AG04450 (cell line): ENCODE measurements at regions of chr11 and their contacts with region 1.

Region 1: GRCh38 chr11:124673333-124674167 is at the starts of genes SIAE and SPA17:
- DNase-seq: peak; percentile 92
- H3K4me3 ChIP-seq: peak within 1 kb of the TSS; percentile 74
- H3K27ac ChIP-seq: peak within 1 kb of the TSS; percentile 69
- H3K27me3 ChIP-seq: no peaks in the 10 kb centered on the region
- CTCF ChIP-seq: no peak
- polyA plus RNA-seq, gene SIAE: 33.5 and 37.9 TPM in 2 replicates
- polyA plus RNA-seq, gene SPA17: 6.5 and 8.4 TPM in 2 replicates

Region 2: GRCh38 chr11:124551189-124551588 is 122.4 kb before region 1 on chr11:
- CTCF ChIA-PET with region 1: no interaction called
- POLR2A ChIA-PET with region 1: no interaction called
- DNase-seq: no peak
- H3K4me3 ChIP-seq: no peak overlapping the region
- H3K27ac ChIP-seq: no peak overlapping the region
- H3K27me3 ChIP-seq: no peaks in the 10 kb centered on the region
- CTCF ChIP-seq: no peak

Region 3: GRCh38 chr11:124622531-124623451 is 50.8 kb before region 1 on chr11 and contains the start of gene TBRG1:
- CTCF ChIA-PET with region 1: no interaction called
- POLR2A ChIA-PET with region 1: no interaction called
- DNase-seq: peak; percentile 72
- H3K4me3 ChIP-seq: peak within 1 kb of the TSS; percentile 97
- H3K27ac ChIP-seq: peak within 1 kb of the TSS; percentile 94
- H3K27me3 ChIP-seq: peaks cover 12% of the 10 kb centered on the region
- CTCF ChIP-seq: no peak
- polyA plus RNA-seq, gene TBRG1: 30.9 and 31.4 TPM in 2 replicates

Region 4: DNA sequence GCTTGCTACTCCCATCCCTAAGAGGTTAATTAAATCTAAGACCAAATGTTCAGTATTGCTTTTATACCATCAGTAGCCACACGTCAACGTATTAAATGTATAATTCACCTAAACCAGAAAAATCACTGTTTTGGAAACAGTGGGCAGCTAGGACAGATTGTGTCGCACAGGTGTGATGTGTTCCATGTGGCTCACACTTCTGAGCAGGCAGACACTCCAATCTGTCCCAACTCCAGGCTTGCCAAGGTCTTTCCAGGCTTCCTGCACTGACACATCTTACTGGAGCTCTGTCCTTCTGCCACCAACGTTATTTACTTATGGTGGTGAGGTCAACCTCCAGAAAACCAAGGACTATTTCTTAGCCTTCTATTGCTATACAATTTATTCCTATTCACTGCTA is 11.4 kb before region 1 on chr11:
- CTCF ChIA-PET with region 1: interaction called, 15 read pairs
- POLR2A ChIA-PET with region 1: no interaction called
- DNase-seq: no peak
- H3K4me3 ChIP-seq: no peak overlapping the region
- H3K27ac ChIP-seq: no peak overlapping the region
- H3K27me3 ChIP-seq: no peaks in the 10 kb centered on the region
- CTCF ChIP-seq: no peak

Region 5: DNA sequence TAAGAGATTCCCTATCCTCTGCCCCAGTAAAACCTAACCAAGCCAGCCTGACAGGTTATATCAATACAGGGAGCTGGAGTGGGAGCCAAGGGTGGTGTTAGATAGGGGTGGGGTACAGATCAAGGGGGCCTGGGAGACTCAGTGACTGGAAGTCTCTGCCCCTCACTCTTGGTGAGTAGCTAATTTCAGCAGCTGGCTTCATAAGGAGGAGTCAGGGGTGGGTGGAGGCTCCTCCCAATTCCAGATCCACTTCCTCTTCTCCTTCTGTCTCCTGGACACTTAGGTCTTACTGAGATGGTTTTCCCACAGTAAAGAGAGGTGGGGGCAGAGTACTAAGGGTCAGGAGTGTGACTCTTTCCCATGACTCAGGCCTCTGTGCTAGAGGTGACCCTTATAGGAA is 79.7 kb after region 1 on chr11:
- CTCF ChIA-PET with region 1: interaction called, 24 read pairs
- POLR2A ChIA-PET with region 1: interaction called, 3 read pairs
- DNase-seq: no peak
- H3K4me3 ChIP-seq: no peak overlapping the region
- H3K27ac ChIP-seq: no peak overlapping the region
- H3K27me3 ChIP-seq: peaks cover 11% of the 10 kb centered on the region
- CTCF ChIP-seq: no peak

Region 6: DNA sequence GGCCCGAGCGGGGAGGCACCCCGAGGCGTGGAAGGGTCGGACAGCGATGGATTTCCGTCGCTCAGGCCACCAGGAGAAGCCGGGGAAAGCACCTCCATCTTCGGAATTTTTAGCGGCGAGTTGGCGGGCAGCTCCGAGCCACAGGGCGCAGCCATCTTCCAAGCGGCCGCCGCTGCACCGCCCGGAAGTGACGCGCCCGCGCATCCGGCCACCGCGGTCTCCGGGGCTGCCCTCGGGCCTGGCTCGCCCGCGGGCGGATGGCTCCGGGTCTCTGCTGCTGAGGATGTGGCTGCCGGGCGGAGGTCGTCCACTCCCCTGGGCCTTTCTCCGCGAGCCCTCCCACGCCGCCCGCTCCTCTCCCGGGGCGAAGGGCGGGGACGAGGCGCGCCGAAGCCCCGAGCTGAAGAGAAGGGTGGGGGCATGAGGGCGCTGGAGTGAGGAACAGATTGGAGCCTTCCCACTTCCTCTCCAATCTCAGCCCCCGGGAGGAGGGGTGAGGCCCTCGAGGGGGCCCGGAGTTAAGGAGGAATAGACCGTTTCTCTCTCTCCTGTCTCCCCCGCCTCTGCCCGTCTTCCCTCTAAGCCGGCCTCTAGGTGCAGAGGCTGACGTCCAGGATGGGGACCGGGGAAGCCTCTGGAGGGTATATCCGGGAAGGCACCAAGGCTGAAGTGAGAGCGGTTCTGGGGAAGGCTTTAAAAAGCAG is 126.8 kb after region 1 on chr11 and contains the start of gene MSANTD2:
- CTCF ChIA-PET with region 1: interaction called, 64 read pairs
- POLR2A ChIA-PET with region 1: interaction called, 3 read pairs
- DNase-seq: peak; percentile 48
- H3K4me3 ChIP-seq: peak within 1 kb of the TSS; percentile 83
- H3K27ac ChIP-seq: peak within 1 kb of the TSS; percentile 96
- H3K27me3 ChIP-seq: no peaks in the 10 kb centered on the region
- CTCF ChIP-seq: no peak
- polyA plus RNA-seq, gene MSANTD2: 7.6 and 9.8 TPM in 2 replicates

Region 7: DNA sequence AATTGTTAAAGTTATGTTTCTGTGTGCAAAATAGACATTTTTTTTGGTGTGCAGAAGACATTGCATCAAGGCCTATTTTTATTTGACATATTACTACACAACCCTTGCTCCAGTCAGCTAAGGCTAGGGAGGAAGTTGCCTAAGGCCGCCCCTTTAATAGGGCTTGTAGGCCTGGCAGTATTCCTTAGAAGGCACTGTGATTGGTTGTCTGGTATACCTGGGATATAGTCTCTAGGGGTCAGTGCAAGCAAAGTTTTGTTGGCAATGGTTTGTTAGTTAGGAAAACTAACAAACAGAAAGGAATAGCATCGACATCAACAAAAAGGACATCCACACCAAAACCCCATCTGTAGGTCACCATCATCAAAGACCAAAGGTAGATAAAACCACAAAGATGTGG is 297.4 kb after region 1 on chr11:
- CTCF ChIA-PET with region 1: no interaction called
- POLR2A ChIA-PET with region 1: no interaction called
- DNase-seq: no peak
- H3K4me3 ChIP-seq: no peak overlapping the region
- H3K27ac ChIP-seq: no peak overlapping the region
- H3K27me3 ChIP-seq: no peaks in the 10 kb centered on the region
- CTCF ChIP-seq: no peak